OCI-LY7 (cell line): ENCODE measurements at regions of chr11 and their contacts with region 1.

Region 1: DNA sequence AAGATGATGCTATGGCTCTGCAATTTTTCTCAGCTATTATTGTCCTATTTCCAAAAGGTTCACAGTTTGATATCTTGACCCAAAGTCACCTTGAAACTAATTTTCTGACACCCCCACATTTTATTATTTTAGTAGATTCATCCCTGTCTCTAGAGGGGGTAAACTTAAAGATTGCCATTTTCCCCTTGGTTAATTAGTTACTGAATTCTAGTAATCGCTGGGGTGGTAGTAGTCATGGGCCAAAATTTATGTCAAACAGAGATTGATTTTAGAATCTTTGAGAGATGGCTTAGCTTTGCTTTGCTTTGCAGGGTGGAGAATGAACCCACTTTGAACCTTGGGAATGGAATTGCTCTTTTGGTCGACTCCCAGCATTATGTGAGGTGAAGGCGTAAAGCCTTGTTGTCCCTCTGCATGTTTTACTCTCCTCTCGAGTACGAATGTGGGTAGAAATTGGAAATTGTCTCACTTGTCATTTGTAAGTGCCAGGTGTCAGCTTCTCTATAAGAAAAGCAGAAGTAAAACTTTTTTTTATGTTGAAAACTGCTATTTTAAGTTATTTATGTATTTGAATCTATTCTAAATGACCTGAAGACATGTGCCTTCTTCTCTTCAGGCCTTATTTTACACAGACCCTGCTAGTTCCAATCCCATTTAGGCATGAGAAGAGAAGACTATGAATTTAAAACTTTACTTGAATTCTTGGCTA is 42.4 kb upstream of the RCE1 start:
- DNase-seq: peak; percentile 94
- H3K4me3 ChIP-seq: peak overlapping the region; percentile 51
- H3K27ac ChIP-seq: peak overlapping the region; percentile 99
- H3K4me1 ChIP-seq: peaks cover 81% of the 10 kb centered on the region
- CTCF ChIP-seq: peak; percentile 30; the same call in 1 of the 2 replicates

Region 2: DNA sequence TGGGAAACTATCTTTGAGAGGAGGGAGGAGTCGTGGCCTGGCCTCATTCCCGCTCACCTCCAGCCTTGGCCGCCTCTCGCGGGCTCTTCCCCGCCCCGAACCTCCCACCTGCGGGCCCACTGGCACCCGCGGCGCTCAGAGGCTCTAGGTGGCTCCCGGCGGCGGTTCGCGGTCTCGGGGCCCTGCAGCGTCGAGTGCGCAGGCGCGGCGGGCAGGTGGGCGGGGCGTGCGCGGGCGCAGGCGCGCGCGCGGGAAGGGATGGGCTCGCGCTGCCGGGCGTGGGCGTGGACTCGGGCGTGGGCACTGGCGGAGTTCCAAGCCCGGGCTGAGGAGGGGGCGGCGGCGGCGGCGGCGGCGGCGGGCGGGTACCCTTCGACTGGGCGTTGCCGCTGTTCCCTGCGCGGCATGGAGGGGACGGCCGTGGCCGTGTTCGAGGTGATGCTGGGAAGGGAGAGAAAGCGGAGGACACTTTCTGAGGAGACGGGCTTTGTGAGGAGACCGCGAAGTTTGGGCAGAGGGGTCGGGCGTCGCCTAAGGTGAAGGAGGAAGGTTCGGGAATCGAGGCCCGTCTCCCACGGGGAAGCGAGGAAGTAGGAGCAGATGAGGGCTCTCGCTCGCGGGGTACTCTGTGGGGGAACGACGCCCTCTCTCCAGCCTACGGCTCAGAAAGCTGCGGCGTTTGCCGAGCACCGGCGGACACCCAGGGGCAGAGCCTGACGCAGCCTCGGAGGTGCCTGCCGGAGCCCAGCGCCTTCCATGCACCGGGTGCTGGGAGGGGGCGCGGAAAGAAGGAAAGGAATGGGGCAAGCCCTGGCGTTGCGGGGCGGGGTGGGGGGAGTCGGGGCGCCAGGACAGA is 56.2 kb before region 1 on chr11:
- CTCF ChIA-PET with region 1: no interaction called
- POLR2A ChIA-PET with region 1: interaction called, 7 read pairs
- intact Hi-C with region 1: loop called (anchors 2 kb)
- DNase-seq: peak; percentile 88
- H3K4me3 ChIP-seq: peak overlapping the region; percentile 86
- H3K27ac ChIP-seq: peak overlapping the region; percentile 62
- H3K4me1 ChIP-seq: peaks cover 36% of the 10 kb centered on the region
- CTCF ChIP-seq: no peak

Region 3: GRCh38 chr11:66766681-66767080 is 34.2 kb before region 1 on chr11:
- CTCF ChIA-PET with region 1: no interaction called
- POLR2A ChIA-PET with region 1: interaction called, 11 read pairs
- intact Hi-C with region 1: no loop called
- DNase-seq: no peak
- H3K4me3 ChIP-seq: no peak overlapping the region
- H3K27ac ChIP-seq: no peak overlapping the region
- H3K4me1 ChIP-seq: no peaks in the 10 kb centered on the region
- CTCF ChIP-seq: no peak

Region 4: GRCh38 chr11:66835768-66836405 is 35.0 kb after region 1 on chr11:
- CTCF ChIA-PET with region 1: no interaction called
- POLR2A ChIA-PET with region 1: interaction called, 5 read pairs
- intact Hi-C with region 1: loop called (anchors 5 kb)
- DNase-seq: no peak
- H3K4me3 ChIP-seq: no peak overlapping the region
- H3K27ac ChIP-seq: peak overlapping the region; percentile 33
- H3K4me1 ChIP-seq: peaks cover 41% of the 10 kb centered on the region
- CTCF ChIP-seq: no peak